Dorsolateral prefrontal cortex (tissue), 120 donors: ENCODE measurements at regions of chr19 and their contacts with region 1.

Region 1: DNA sequence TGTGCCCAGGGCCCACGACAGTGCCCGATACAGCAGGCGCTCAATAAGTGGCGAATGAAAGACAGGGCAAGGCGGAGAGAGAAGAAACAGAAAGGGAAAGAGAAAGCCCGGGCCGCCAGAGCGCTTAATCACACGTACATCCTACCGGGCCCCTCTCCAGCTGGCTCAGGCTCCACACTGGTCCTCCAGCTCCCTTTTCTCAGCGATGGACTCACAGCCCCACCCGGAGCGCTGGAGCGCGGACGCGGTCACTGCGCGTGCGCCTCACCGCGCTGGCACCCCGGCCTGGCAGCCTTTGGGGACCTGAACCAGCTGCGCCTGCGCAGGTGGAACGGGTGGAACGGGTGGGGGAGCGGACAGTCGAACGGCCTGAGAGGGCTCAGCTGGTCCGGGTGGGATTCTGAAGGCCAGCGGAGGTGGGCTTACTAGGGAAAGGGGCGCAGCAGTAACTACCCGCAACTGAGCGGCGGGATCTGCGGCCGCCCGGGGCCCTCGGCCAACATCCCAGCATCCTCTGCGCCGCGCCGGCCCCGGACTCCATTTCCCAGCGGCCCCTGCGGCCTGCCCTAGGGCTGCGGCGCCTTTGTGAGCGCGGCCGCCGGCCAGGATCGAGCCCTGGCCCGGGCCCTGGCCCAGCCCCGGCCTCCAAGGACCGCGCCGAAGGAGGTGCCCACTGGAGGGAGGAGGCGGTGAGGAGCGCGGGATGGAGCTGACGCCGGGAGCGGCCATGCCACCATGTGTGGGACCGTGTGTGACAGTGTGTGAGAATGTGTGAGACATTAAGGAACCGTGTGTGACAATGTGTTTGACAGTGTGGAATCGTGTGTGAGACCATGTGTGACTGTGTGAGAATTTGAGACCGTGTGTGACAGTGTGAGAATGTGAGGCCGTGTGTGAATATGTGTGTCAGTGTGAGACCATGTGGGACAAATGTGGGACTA is at the start of gene ZNF583:
- DNase-seq: peak; percentile 90 to 95 (median 94)
- H3K4me3 ChIP-seq: peak within 1 kb of the TSS; percentile 61 to 99 (median 87)
- H3K27ac ChIP-seq: peak within 1 kb of the TSS; percentile 92 to 100 (median 99)
- H3K27me3 ChIP-seq: no peaks in the 10 kb centered on the region
- CTCF ChIP-seq: peak in 28 of 56 donors; percentile 3 to 54 (median 24)
- total RNA-seq, gene ZNF583: 10.0 to 26.2 (median 16.7) TPM

Region 2: GRCh38 chr19:56507446-56508289 is 103.6 kb after region 1 on chr19 and contains the start of gene ZNF471:
- intact Hi-C with region 1: loop called (anchors 1 to 10 kb)
- DNase-seq: peak; percentile 98 to 100 (median 99)
- H3K4me3 ChIP-seq: peak within 1 kb of the TSS; percentile 54 to 96 (median 80)
- H3K27ac ChIP-seq: peak within 1 kb of the TSS; percentile 87 to 99 (median 97)
- H3K27me3 ChIP-seq: no peaks in the 10 kb centered on the region
- CTCF ChIP-seq: peak in 14 of 56 donors; percentile 8 to 43 (median 15)
- total RNA-seq, gene ZNF471: 17.4 to 50.0 (median 29.5) TPM